Panc1 (cell line): ENCODE measurements at regions of chr10 and their contacts with region 1.

Region 1: DNA sequence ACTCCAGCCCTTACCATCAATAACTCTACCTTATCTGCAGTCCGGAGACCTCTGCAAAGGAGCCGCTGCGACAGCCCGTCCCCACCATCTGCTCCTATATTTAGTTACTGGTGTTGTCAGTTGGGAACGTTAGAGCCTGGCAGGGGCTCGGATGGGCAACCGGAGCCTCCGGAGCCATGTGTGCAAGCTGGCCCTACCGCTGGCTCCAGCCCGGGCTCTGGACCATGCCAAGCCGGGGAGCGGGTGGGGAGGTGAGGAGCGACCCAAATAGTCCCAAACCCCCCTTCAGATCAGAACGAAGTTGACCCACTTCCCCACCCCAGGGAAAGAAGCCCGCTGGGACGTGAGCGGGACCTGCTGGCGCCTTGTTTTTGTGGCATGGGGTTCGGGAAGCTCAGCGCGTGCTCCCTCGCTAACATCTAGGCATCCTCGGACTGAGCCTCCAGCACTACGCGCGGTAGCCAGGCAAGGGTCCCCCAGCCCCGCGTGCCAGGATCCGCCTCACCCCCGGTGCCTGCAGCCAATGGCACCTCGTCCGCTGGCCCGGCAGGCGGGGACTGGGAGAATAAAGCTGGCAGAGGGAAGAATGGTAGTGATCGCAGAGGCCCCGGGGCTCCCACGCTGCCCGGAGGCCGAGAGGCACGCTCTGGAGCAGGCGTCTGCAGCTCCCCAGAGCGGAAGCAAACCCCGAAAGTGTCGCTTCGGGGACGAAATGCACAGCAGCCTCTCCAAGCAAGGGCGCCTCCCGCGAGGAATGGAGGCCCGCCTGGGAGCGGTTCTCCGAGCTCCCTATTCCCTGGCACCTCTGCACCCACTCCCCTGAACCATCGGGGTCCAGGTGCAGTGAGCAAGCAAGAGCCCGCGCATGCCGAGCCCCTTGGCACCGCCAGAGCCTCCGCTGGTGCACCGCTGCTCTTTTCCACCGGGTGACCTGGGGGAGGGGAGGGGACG is 679 bp downstream of the LRRC20 start:
- DNase-seq: no peak
- ATAC-seq: peak; percentile 45
- H3K4me3 ChIP-seq: peak overlapping the region; percentile 89 to 95
- H3K27ac ChIP-seq: peak overlapping the region; percentile 86
- H3K4me1 ChIP-seq: peaks cover 43% of the 10 kb centered on the region
- H3K27me3 ChIP-seq: no peaks in the 10 kb centered on the region
- CTCF ChIP-seq: no peak

Region 2: GRCh38 chr10:70432101-70432500 is 50.4 kb after region 1 on chr10:
- CTCF ChIA-PET with region 1: interaction called, 6 read pairs
- POLR2A ChIA-PET with region 1: interaction called, 12 read pairs
- in situ Hi-C with region 1: no loop called
- intact Hi-C with region 1: no loop called
- DNase-seq: no peak
- ATAC-seq: 0 out of 2 replicates have a peak, but pooled peaks have one; percentile 10
- H3K4me3 ChIP-seq: no peak overlapping the region
- H3K27ac ChIP-seq: no peak overlapping the region
- H3K4me1 ChIP-seq: no peaks in the 10 kb centered on the region
- H3K27me3 ChIP-seq: no peaks in the 10 kb centered on the region
- CTCF ChIP-seq: no peak